ENCODE measurements at regions of chrX and their contacts with region 1.

Region 1: GRCh38 chrX:41010188-41010846 is 74.9 kb upstream of the USP9X start:
- DNase-seq: peak; percentile 65
- ATAC-seq: peak; percentile 84
- H3K4me3 Mint-ChIP-seq: peak overlapping the region; percentile 56
- H3K27ac Mint-ChIP-seq: peak overlapping the region; percentile 83
- H3K4me1 Mint-ChIP-seq: peaks cover 22% of the 10 kb centered on the region
- H3K27me3 Mint-ChIP-seq: no peaks in the 10 kb centered on the region

Region 2: DNA sequence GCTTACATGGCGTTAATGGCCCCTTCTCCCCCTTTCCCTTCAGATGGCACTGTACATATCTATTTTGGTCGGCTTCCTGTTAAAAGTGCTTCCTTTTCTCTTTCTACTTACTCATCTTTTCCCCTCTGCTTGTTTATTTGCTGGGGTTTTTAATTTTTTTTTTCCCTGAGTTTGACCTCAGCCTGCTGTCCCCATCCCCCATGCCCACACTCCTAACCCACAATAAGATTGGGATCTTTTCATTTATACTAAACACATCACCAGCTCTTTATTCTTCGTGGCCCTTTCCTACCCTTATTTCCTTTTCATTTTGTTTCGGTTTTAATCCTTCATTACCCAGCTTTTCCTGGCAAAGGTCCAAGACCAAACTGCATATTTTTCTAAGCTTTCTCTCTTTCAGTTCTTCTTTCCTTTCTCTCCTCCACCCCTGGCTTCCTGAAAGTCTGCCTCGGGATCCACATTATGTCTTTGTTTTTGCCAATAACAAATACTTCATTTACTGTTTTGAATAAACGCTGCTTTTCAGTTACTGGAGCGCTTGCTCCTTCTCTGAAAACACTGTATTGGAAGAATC is 77.1 kb before region 1 on chrX:
- CTCF ChIA-PET with region 1: no interaction called
- POLR2A ChIA-PET with region 1: no interaction called
- intact Hi-C with region 1: loop called (anchors 1 to 5 kb)
- DNase-seq: peak; percentile 40
- ATAC-seq: peak; percentile 74
- H3K4me3 Mint-ChIP-seq: peak overlapping the region; percentile 67
- H3K27ac Mint-ChIP-seq: peak overlapping the region; percentile 95
- H3K4me1 Mint-ChIP-seq: peaks cover 20% of the 10 kb centered on the region
- H3K27me3 Mint-ChIP-seq: no peaks in the 10 kb centered on the region

Measured in activated CD4-positive, alpha-beta T cell treated with anti-CD3 and anti-CD28 coated beads for 36 hours (primary cell).